Pancreas (tissue), 10 donors: ENCODE measurements at regions of chr14 and their contacts with region 1.

Region 1: GRCh38 chr14:70714055-70714621 is 72.4 kb downstream of the TTC9 start:
- DNase-seq: peak in 2 of 6 donors; percentile 25 to 28
- ATAC-seq: peak in 3 of 4 donors; percentile 49 to 72 (median 57)
- H3K4me3 ChIP-seq: no peak overlapping the region
- H3K27ac ChIP-seq: no peak overlapping the region
- H3K4me1 ChIP-seq: peaks cover 0 to 14% (median 12%) of the 10 kb centered on the region in 3 donors
- H3K27me3 ChIP-seq: no peaks in the 10 kb centered on the region
- CTCF ChIP-seq: peak in 3 of 4 donors; percentile 54 to 55 (median 54)

Region 2: DNA sequence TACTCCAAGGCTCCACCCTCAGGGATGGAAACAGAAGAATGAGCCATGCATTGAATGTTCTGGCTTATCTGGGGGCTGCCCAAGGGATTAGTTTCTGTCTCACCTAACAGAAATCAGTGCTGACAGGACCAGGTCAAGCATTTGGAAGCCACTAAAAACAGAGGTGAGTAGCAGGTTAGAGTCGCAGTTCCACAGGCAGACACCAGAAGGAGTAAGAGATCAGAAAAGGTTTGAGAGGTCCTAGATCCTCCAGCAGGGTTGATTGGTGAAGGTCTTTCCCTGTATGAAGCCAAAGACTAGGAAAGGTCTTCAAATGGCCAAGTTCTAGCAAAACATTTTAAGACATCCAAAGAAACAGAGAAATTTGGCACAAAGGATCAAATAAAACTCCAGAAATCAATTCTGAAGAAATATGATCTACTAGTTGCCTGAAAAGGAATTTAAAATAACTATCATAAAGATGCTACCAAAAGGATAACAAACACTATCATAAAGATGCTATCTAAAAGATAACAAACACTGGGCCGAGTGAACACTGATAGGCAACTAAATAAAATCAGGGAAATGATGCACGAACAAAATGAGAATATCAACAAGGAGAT is 91.9 kb before region 1 on chr14:
- intact Hi-C with region 1: loop called in 1 of 3 experiments (anchors 10 kb)
- DNase-seq: peak in 3 of 6 donors; percentile 18 to 62 (median 22)
- ATAC-seq: peak in 3 of 4 donors; percentile 90 to 96 (median 90)
- H3K4me3 ChIP-seq: no peak overlapping the region
- H3K27ac ChIP-seq: no peak overlapping the region
- H3K4me1 ChIP-seq: no peaks in the 10 kb centered on the region
- H3K27me3 ChIP-seq: no peaks in the 10 kb centered on the region
- CTCF ChIP-seq: peak in 3 of 4 donors; percentile 48 to 58 (median 49)

Region 3: DNA sequence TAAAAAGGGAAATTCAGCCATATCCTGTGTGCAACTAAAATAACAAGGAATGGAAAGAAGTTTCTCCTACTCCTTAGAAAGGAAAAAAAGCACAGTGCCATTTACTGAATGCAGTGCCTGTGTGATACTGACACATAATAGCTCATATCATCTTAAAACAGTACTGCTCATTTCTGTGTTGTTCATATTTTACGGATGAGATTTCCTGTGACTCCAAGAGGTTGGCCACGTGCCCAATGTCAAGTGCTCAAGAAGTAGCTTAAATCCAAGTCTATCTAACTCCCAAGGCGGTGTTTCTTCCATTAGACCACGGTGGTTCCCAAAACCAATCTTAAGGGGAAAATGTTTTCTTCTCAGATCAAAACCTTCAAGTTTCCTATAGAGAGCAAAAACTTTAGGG is 75.2 kb after region 1 on chr14:
- intact Hi-C with region 1: no loop called
- DNase-seq: no peak
- ATAC-seq: no peak
- H3K4me3 ChIP-seq: no peak overlapping the region
- H3K27ac ChIP-seq: no peak overlapping the region
- H3K4me1 ChIP-seq: no peaks in the 10 kb centered on the region
- H3K27me3 ChIP-seq: no peaks in the 10 kb centered on the region
- CTCF ChIP-seq: no peak